ENCODE measurements at regions of chr17 and their contacts with region 1.

Region 1: GRCh38 chr17:79393358-79394202 is 217.3 kb downstream of the RBFOX3 start:
- H3K4me3 ChIP-seq: no peak overlapping the region
- H3K27ac ChIP-seq: no peak overlapping the region
- H3K4me1 ChIP-seq: no peaks in the 10 kb centered on the region
- CTCF ChIP-seq: peak; percentile 87

Region 2: GRCh38 chr17:79045842-79046196 is 347.8 kb before region 1 on chr17:
- CTCF ChIA-PET with region 1: interaction called, 46 read pairs
- POLR2A ChIA-PET with region 1: no interaction called
- H3K4me3 ChIP-seq: no peak overlapping the region
- H3K27ac ChIP-seq: no peak overlapping the region
- H3K4me1 ChIP-seq: no peaks in the 10 kb centered on the region
- CTCF ChIP-seq: peak; percentile 91

Region 3: GRCh38 chr17:79109570-79109969 is 284.0 kb before region 1 on chr17:
- CTCF ChIA-PET with region 1: interaction called, 20 read pairs
- POLR2A ChIA-PET with region 1: no interaction called
- H3K4me3 ChIP-seq: no peak overlapping the region
- H3K27ac ChIP-seq: no peak overlapping the region
- H3K4me1 ChIP-seq: peaks cover 7% of the 10 kb centered on the region
- CTCF ChIP-seq: peak; percentile 76

Region 4: GRCh38 chr17:79188048-79188447 is 205.5 kb before region 1 on chr17:
- CTCF ChIA-PET with region 1: interaction called, 68 read pairs
- POLR2A ChIA-PET with region 1: interaction called, 4 read pairs
- H3K4me3 ChIP-seq: no peak overlapping the region
- H3K27ac ChIP-seq: no peak overlapping the region
- H3K4me1 ChIP-seq: no peaks in the 10 kb centered on the region
- CTCF ChIP-seq: peak; percentile 84

Region 5: GRCh38 chr17:79482752-79483521 is 89.4 kb after region 1 on chr17:
- CTCF ChIA-PET with region 1: no interaction called
- POLR2A ChIA-PET with region 1: no interaction called
- H3K4me3 ChIP-seq: no peak overlapping the region
- H3K27ac ChIP-seq: no peak overlapping the region
- H3K4me1 ChIP-seq: no peaks in the 10 kb centered on the region
- CTCF ChIP-seq: no peak

Region 6: DNA sequence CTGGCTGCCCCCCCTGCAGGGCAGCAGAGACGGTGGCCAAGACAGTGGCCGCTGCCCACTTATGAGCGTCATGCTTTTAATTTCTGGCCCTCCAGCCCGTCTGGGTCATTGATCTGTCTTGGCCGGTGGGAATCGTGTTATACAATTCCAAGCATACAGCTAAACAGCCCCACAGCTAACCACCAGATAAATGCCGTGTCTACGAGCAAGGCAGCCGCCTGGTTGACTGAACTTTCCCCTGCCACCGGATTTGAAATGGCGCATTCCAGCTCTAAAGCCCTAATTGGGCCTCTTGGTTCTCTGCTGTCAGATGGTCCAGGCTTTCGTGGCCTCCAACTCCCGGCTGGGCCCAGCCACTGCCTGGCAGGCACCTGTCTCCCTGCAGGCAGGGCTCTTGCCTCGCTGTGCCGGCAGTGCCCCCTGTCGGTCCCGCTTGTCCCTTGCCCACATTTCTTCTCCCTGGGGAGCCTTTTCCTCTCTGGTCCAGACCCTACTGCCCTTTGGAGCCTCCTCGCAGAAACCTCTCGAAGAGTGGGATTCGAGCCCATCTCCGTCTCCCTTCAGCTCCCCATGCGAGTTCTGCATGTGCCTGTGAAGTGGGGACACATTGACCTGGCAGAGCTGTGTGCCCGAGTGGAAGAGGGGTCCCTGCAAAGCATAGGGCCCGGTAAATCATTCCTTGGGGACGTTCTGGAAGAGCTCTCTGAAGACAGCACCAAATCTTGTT is 219.1 kb after region 1 on chr17:
- CTCF ChIA-PET with region 1: interaction called, 40 read pairs
- POLR2A ChIA-PET with region 1: no interaction called
- H3K4me3 ChIP-seq: no peak overlapping the region
- H3K27ac ChIP-seq: no peak overlapping the region
- H3K4me1 ChIP-seq: peaks cover 7% of the 10 kb centered on the region; the same call in 1 of the 2 replicates
- CTCF ChIP-seq: peak; percentile 75